Adrenal gland (tissue), 19 donors: ENCODE measurements at regions of chr13 and their contacts with region 1.

Region 1: DNA sequence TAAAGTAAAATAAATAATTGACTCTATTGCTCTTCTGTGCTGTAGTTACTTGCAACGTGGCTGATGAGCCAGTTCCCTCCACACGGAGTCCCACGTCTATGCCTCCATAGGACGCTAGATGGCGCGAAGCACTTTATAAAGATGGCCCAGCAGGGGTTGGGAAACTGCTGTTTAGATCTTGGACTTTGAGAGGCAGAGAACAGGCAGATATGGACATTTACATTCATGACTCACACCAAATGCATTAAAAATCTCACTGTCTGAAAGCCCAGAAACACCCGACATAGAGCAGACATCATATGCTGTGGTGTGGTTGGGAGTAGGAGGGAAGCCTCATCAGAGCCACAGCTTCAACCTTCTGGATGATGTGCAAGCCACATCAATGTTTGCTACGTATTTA is 643.1 kb upstream of the ARGLU1 start:
- DNase-seq: peak; percentile 52 to 93 (median 75)
- H3K4me3 ChIP-seq: no peak overlapping the region
- H3K27ac ChIP-seq: no peak overlapping the region
- H3K4me1 ChIP-seq: no peaks in the 10 kb centered on the region
- H3K27me3 ChIP-seq: no peaks in the 10 kb centered on the region
- CTCF ChIP-seq: peak; percentile 69 to 89 (median 81)
- POLR2A ChIP-seq: no peak

Region 2: DNA sequence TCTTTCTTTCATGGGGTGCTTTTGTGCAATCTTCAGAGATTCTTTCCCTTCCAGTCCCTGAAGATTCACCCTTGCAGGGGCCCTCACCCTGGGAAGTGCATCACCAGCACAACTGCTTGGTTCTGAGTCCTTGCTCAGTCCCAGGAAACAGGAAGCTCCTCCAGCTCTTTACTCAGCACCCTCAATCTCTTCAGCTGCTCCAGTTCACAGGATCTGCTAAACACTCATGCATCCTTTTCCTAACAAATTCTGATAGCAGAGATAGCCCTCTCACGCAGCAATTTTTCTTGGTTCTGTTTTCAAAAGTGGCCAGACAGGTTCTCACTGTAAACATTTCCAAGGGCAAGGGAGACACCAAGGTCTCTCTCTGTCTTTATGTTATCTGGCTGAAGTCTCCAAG is 181.1 kb after region 1 on chr13:
- intact Hi-C with region 1: no loop called
- DNase-seq: no peak
- H3K4me3 ChIP-seq: no peak overlapping the region
- H3K27ac ChIP-seq: no peak overlapping the region
- H3K4me1 ChIP-seq: no peaks in the 10 kb centered on the region
- H3K27me3 ChIP-seq: no peaks in the 10 kb centered on the region
- CTCF ChIP-seq: no peak
- POLR2A ChIP-seq: no peak

Region 3: GRCh38 chr13:107650081-107650701 is 439.1 kb after region 1 on chr13:
- intact Hi-C with region 1: loop called (anchors 5 to 10 kb)
- DNase-seq: peak; percentile 22 to 76 (median 47)
- H3K4me3 ChIP-seq: no peak overlapping the region
- H3K27ac ChIP-seq: no peak overlapping the region
- H3K4me1 ChIP-seq: no peaks in the 10 kb centered on the region
- H3K27me3 ChIP-seq: no peaks in the 10 kb centered on the region
- CTCF ChIP-seq: peak; percentile 50 to 73 (median 70)
- POLR2A ChIP-seq: no peak

Region 4: GRCh38 chr13:108155185-108156106 is 944.4 kb after region 1 on chr13:
- intact Hi-C with region 1: loop called (anchors 10 kb)
- DNase-seq: peak; percentile 20 to 81 (median 45)
- H3K4me3 ChIP-seq: no peak overlapping the region
- H3K27ac ChIP-seq: no peak overlapping the region
- H3K4me1 ChIP-seq: no peaks in the 10 kb centered on the region
- H3K27me3 ChIP-seq: no peaks in the 10 kb centered on the region
- CTCF ChIP-seq: peak; percentile 54 to 83 (median 60)
- POLR2A ChIP-seq: no peak